ENCODE measurements at regions of chr3 and their contacts with region 1.

Region 1: GRCh38 chr3:18988614-18989229 is 159.6 kb upstream of the KCNH8 start:
- DNase-seq: no peak
- H3K4me3 Mint-ChIP-seq: peak overlapping the region; percentile 74
- H3K27ac Mint-ChIP-seq: peak overlapping the region; percentile 71
- H3K4me1 Mint-ChIP-seq: peaks cover 20% of the 10 kb centered on the region
- H3K27me3 Mint-ChIP-seq: peaks cover 15% of the 10 kb centered on the region

Region 2: GRCh38 chr3:17639765-17640164 is 1349.0 kb before region 1 on chr3:
- CTCF ChIA-PET with region 1: no interaction called
- intact Hi-C with region 1: loop called (anchors 2 kb)
- DNase-seq: no peak
- H3K4me3 Mint-ChIP-seq: no peak overlapping the region
- H3K27ac Mint-ChIP-seq: no peak overlapping the region
- H3K4me1 Mint-ChIP-seq: peaks cover 25% of the 10 kb centered on the region
- H3K27me3 Mint-ChIP-seq: no peaks in the 10 kb centered on the region

Region 3: GRCh38 chr3:18389108-18389733 is 599.5 kb before region 1 on chr3:
- CTCF ChIA-PET with region 1: no interaction called
- intact Hi-C with region 1: loop called (anchors 5 kb)
- DNase-seq: no peak
- H3K4me3 Mint-ChIP-seq: no peak overlapping the region
- H3K27ac Mint-ChIP-seq: no peak overlapping the region
- H3K4me1 Mint-ChIP-seq: peaks cover 77% of the 10 kb centered on the region
- H3K27me3 Mint-ChIP-seq: no peaks in the 10 kb centered on the region

Region 4: DNA sequence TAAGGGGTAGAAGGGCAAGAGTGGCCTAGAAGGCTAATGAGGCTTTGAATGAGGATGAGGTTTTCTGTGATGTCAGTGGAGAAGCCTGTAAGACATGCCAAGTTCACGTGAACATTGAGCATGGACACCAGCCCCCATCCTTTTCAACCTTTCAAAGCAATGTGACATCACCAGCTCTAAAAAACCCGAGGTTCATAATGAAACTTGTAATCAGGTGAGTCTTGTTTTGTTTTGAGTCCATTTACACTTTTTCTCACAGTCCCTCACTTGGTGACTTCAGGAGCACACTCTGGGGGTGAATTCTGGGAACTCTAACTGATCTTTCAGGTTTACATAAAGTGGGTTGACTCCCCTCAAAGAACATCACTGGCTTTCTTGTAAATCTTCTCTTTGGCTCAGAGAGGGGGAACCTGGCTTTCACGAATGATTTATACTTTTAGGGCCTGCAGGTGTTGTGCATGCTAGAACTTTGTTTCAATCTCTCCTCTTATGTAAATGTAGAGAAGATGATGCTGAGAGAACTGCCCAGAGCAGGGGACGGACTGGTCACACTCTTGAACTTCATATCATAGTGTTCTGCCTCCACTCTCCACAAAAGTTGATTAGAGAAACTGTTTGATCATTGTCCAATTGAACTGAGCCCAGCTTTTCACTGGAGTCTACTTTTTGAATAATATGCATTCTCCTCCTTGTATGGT is 338.9 kb before region 1 on chr3:
- CTCF ChIA-PET with region 1: no interaction called
- intact Hi-C with region 1: loop called (anchors 2 kb)
- DNase-seq: peak; percentile 87
- H3K4me3 Mint-ChIP-seq: no peak overlapping the region
- H3K27ac Mint-ChIP-seq: peak overlapping the region; percentile 92
- H3K4me1 Mint-ChIP-seq: peaks cover 74% of the 10 kb centered on the region
- H3K27me3 Mint-ChIP-seq: no peaks in the 10 kb centered on the region

Region 5: DNA sequence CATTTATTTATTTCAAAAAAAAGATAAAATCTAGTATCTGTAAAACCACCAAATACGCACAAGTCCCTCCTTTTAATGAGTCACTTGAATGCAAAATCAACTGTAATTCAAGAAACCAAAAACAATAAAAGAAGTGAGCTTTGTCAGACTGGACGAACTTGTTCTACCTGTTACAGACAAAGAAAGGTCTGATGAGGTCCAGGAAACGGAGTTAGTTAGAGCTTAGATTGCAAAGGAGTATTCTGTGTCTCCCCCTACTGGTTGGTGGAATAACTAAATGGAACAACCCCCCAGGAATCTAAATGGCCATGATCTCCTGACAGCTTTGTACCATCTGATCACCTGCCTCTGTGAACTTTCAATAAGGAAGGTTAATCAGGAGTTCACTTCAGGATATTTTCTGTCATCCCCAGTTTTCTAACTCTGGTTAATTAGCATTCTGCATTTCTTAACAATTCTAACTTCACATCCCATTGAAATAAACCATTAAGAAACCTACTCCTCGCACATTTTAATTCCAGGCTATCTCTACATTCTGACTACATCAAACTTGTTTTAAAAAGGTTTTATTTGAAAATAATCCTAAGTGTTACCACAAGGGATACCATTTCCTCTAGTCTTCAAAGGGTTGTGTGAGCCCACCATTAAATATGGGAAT is 230.5 kb before region 1 on chr3:
- CTCF ChIA-PET with region 1: interaction called, 16 read pairs
- intact Hi-C with region 1: loop called (anchors 1 kb)
- DNase-seq: peak; percentile 38
- H3K4me3 Mint-ChIP-seq: no peak overlapping the region
- H3K27ac Mint-ChIP-seq: peak overlapping the region; percentile 57
- H3K4me1 Mint-ChIP-seq: peaks cover 43% of the 10 kb centered on the region
- H3K27me3 Mint-ChIP-seq: no peaks in the 10 kb centered on the region

Region 6: DNA sequence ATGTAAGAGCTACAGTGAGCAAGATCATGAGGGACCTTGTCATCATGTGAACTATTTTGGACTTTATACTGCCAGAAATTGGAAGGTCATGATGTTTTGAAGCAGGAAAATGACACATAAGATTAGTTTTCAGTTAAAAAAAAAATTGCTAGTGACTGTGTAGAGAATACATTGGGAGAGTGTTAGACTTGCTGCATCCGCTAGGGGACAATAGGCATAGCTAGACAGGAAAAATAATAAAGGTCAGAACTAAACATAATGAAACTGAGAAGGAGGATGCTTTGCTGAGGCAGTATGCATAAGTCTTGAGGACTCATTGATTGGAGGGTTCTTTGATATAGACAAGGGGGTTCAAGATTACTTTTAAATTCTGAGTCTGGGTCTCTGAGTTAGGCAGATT is 116.3 kb before region 1 on chr3:
- CTCF ChIA-PET with region 1: interaction called, 7 read pairs
- intact Hi-C with region 1: loop called (anchors 1 kb)
- DNase-seq: no peak
- H3K4me3 Mint-ChIP-seq: no peak overlapping the region
- H3K27ac Mint-ChIP-seq: no peak overlapping the region
- H3K4me1 Mint-ChIP-seq: peaks cover 51% of the 10 kb centered on the region
- H3K27me3 Mint-ChIP-seq: no peaks in the 10 kb centered on the region

Region 7: DNA sequence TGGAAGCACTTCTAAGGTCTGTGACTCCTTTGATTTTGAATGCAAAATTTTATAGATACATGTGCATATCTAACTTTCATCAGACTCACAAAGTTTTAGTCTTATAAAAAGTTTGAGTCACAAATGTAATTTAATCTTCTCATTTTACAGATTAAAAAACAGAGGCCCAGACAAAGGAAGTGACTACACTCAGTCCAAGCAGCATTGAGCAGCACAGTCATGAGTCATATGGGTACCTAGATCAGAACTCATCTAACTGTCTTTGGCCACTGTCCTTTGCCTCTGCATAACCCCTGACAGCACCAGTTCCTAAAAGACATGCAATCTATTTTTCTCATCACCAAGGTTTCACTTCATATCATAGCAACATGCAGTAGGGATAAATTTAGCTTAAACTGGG is 51.1 kb before region 1 on chr3:
- CTCF ChIA-PET with region 1: no interaction called
- intact Hi-C with region 1: no loop called
- DNase-seq: no peak
- H3K4me3 Mint-ChIP-seq: no peak overlapping the region
- H3K27ac Mint-ChIP-seq: no peak overlapping the region
- H3K4me1 Mint-ChIP-seq: no peaks in the 10 kb centered on the region
- H3K27me3 Mint-ChIP-seq: no peaks in the 10 kb centered on the region

Measured in activated naive CD4-positive, alpha-beta T cell treated with anti-CD3 and anti-CD28 coated beads for 36 hours (primary cell).